Breast epithelium (tissue), 4 donors: ENCODE measurements at regions of chrX and their contacts with region 1.

Region 1: GRCh38 chrX:69813677-69814076 is 197.8 kb downstream of the EDA start:
- DNase-seq: no peak
- H3K4me3 ChIP-seq: no peak overlapping the region
- H3K27ac ChIP-seq: no peak overlapping the region
- H3K4me1 ChIP-seq: no peaks in the 10 kb centered on the region
- H3K27me3 ChIP-seq: peaks cover 0 to 15% of the 10 kb centered on the region in 2 donors
- CTCF ChIP-seq: no peak
- POLR2A ChIP-seq: no peak

Region 2: GRCh38 chrX:69412661-69413060 is 401.0 kb before region 1 on chrX:
- intact Hi-C with region 1: loop called (anchors 5 kb)
- DNase-seq: no peak
- H3K4me3 ChIP-seq: no peak overlapping the region
- H3K27ac ChIP-seq: no peak overlapping the region
- H3K4me1 ChIP-seq: no peaks in the 10 kb centered on the region
- H3K27me3 ChIP-seq: peaks cover 0 to 15% of the 10 kb centered on the region in 2 donors
- CTCF ChIP-seq: no peak
- POLR2A ChIP-seq: no peak

Region 3: GRCh38 chrX:69424161-69424560 is 389.5 kb before region 1 on chrX:
- intact Hi-C with region 1: no loop called
- DNase-seq: no peak
- H3K4me3 ChIP-seq: no peak overlapping the region
- H3K27ac ChIP-seq: no peak overlapping the region
- H3K4me1 ChIP-seq: no peaks in the 10 kb centered on the region
- H3K27me3 ChIP-seq: peaks cover 0 to 36% of the 10 kb centered on the region in 2 donors
- CTCF ChIP-seq: no peak
- POLR2A ChIP-seq: no peak

Region 4: GRCh38 chrX:69795702-69796101 is 18.0 kb before region 1 on chrX:
- intact Hi-C with region 1: no loop called
- DNase-seq: no peak
- H3K4me3 ChIP-seq: no peak overlapping the region
- H3K27ac ChIP-seq: no peak overlapping the region
- H3K4me1 ChIP-seq: no peaks in the 10 kb centered on the region
- H3K27me3 ChIP-seq: peaks cover 0 to 24% of the 10 kb centered on the region in 2 donors
- CTCF ChIP-seq: no peak
- POLR2A ChIP-seq: no peak

Region 5: GRCh38 chrX:71198066-71198465 is 1384.4 kb after region 1 on chrX:
- intact Hi-C with region 1: no loop called
- DNase-seq: no peak
- H3K4me3 ChIP-seq: peak overlapping the region in 1 of 3 donors; percentile 13
- H3K27ac ChIP-seq: no peak overlapping the region
- H3K4me1 ChIP-seq: no peaks in the 10 kb centered on the region
- H3K27me3 ChIP-seq: peaks cover 0 to 38% of the 10 kb centered on the region in 2 donors
- CTCF ChIP-seq: no peak
- POLR2A ChIP-seq: no peak